Prostate gland (tissue), 2 donors: ENCODE measurements at regions of chr9 and their contacts with region 1.

Region 1: GRCh38 chr9:15277400-15278090 is 29.5 kb downstream of the TTC39B start:
- DNase-seq: no peak
- H3K4me3 ChIP-seq: no peak overlapping the region
- H3K27ac ChIP-seq: no peak overlapping the region
- H3K4me1 ChIP-seq: no peaks in the 10 kb centered on the region
- H3K27me3 ChIP-seq: no peaks in the 10 kb centered on the region
- CTCF ChIP-seq: peak in 3 of 4 experiments; percentile 24 to 44 (median 38)
- POLR2A ChIP-seq: no peak

Region 2: DNA sequence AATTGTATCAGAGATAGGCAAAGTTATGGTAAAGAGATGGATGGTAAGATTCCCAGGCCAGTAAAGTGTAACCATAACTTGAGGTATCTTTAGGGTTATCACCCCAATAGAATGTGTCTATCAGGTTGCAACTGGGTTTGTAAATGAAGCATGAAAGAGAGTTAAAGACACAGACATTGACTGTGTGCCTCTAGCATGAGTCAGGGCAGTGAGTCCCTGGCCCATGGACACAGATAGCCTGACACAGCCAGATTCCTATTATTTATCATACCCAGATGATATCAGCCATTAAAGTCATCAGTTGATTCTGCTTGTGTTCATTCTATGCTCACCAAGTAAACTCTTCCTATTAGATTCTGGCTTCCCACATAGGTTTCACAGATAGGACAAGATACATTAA is 111.6 kb after region 1 on chr9:
- intact Hi-C with region 1: no loop called
- DNase-seq: no peak
- H3K4me3 ChIP-seq: no peak overlapping the region
- H3K27ac ChIP-seq: no peak overlapping the region
- H3K4me1 ChIP-seq: no peaks in the 10 kb centered on the region
- H3K27me3 ChIP-seq: no peaks in the 10 kb centered on the region
- CTCF ChIP-seq: no peak
- POLR2A ChIP-seq: no peak

Region 3: GRCh38 chr9:15485836-15486666 is 208.5 kb after region 1 on chr9:
- intact Hi-C with region 1: no loop called
- DNase-seq: no peak
- H3K4me3 ChIP-seq: no peak overlapping the region
- H3K27ac ChIP-seq: no peak overlapping the region
- H3K4me1 ChIP-seq: no peaks in the 10 kb centered on the region
- H3K27me3 ChIP-seq: no peaks in the 10 kb centered on the region
- CTCF ChIP-seq: peak in 2 of 4 experiments; percentile 20 to 40
- POLR2A ChIP-seq: no peak

Region 4: GRCh38 chr9:15606643-15607472 is 329.3 kb after region 1 on chr9:
- intact Hi-C with region 1: loop called (anchors 10 kb)
- DNase-seq: peak; percentile 25
- H3K4me3 ChIP-seq: no peak overlapping the region
- H3K27ac ChIP-seq: no peak overlapping the region
- H3K4me1 ChIP-seq: no peaks in the 10 kb centered on the region
- H3K27me3 ChIP-seq: no peaks in the 10 kb centered on the region
- CTCF ChIP-seq: peak; percentile 73 to 84 (median 76)
- POLR2A ChIP-seq: no peak